Activated CD4-positive, alpha-beta T cell treated with anti-CD3 and anti-CD28 coated beads for 36 hours (primary cell): ENCODE measurements at regions of chr2 and their contacts with region 1.

Region 1: GRCh38 chr2:174465327-174465726 is 21.5 kb downstream of the GPR155 start:
- DNase-seq: no peak
- ATAC-seq: no peak
- H3K4me3 Mint-ChIP-seq: no peak overlapping the region
- H3K27ac Mint-ChIP-seq: no peak overlapping the region
- H3K4me1 Mint-ChIP-seq: no peaks in the 10 kb centered on the region
- H3K27me3 Mint-ChIP-seq: no peaks in the 10 kb centered on the region

Region 2: DNA sequence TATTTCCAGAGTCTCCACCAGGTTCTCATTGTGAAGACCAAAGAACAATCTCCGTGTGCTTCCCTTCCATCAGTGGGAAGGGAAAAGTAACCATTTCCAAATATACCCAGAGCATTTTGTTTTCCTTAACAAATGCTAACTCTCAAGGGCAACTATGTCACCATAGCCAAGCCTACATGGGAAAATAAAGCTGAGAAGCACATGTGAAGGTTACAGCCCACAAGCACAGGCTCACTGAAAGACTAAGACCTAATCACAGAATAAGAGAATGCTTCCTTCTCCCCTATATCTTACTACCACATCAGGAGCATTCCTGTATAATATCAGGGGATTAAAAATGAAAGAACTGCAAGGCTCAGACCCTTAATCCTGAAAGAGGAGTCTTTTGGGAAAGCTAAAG is 102.4 kb before region 1 on chr2:
- CTCF ChIA-PET with region 1: no interaction called
- POLR2A ChIA-PET with region 1: no interaction called
- intact Hi-C with region 1: no loop called
- DNase-seq: no peak
- ATAC-seq: no peak
- H3K4me3 Mint-ChIP-seq: no peak overlapping the region
- H3K27ac Mint-ChIP-seq: no peak overlapping the region
- H3K4me1 Mint-ChIP-seq: no peaks in the 10 kb centered on the region
- H3K27me3 Mint-ChIP-seq: no peaks in the 10 kb centered on the region

Region 3: GRCh38 chr2:174522553-174522952 is 57.2 kb after region 1 on chr2:
- CTCF ChIA-PET with region 1: interaction called, 52 read pairs
- POLR2A ChIA-PET with region 1: interaction called, 9 read pairs
- intact Hi-C with region 1: loop called (anchors 1 kb)
- DNase-seq: no peak
- ATAC-seq: no peak
- H3K4me3 Mint-ChIP-seq: no peak overlapping the region
- H3K27ac Mint-ChIP-seq: no peak overlapping the region
- H3K4me1 Mint-ChIP-seq: peaks cover 10% of the 10 kb centered on the region
- H3K27me3 Mint-ChIP-seq: peaks cover 2% of the 10 kb centered on the region

Region 4: GRCh38 chr2:174554529-174555150 is 89.3 kb after region 1 on chr2:
- CTCF ChIA-PET with region 1: interaction called, 11 read pairs
- POLR2A ChIA-PET with region 1: no interaction called
- intact Hi-C with region 1: no loop called
- DNase-seq: no peak
- ATAC-seq: peak; percentile 53
- H3K4me3 Mint-ChIP-seq: no peak overlapping the region
- H3K27ac Mint-ChIP-seq: peak overlapping the region; percentile 79
- H3K4me1 Mint-ChIP-seq: peaks cover 35% of the 10 kb centered on the region
- H3K27me3 Mint-ChIP-seq: no peaks in the 10 kb centered on the region

Region 5: GRCh38 chr2:174577967-174578589 is 112.8 kb after region 1 on chr2:
- CTCF ChIA-PET with region 1: interaction called, 44 read pairs
- POLR2A ChIA-PET with region 1: no interaction called
- intact Hi-C with region 1: no loop called
- DNase-seq: peak; percentile 68
- ATAC-seq: peak; percentile 74
- H3K4me3 Mint-ChIP-seq: no peak overlapping the region
- H3K27ac Mint-ChIP-seq: peak overlapping the region; percentile 31
- H3K4me1 Mint-ChIP-seq: peaks cover 72% of the 10 kb centered on the region
- H3K27me3 Mint-ChIP-seq: no peaks in the 10 kb centered on the region

Region 6: GRCh38 chr2:174682578-174683391 is 217.5 kb after region 1 on chr2:
- CTCF ChIA-PET with region 1: interaction called, 58 read pairs
- POLR2A ChIA-PET with region 1: no interaction called
- intact Hi-C with region 1: no loop called
- DNase-seq: peak; percentile 66
- ATAC-seq: peak; percentile 66
- H3K4me3 Mint-ChIP-seq: peak overlapping the region; percentile 82
- H3K27ac Mint-ChIP-seq: peak overlapping the region; percentile 90
- H3K4me1 Mint-ChIP-seq: peaks cover 48% of the 10 kb centered on the region
- H3K27me3 Mint-ChIP-seq: no peaks in the 10 kb centered on the region

Region 7: DNA sequence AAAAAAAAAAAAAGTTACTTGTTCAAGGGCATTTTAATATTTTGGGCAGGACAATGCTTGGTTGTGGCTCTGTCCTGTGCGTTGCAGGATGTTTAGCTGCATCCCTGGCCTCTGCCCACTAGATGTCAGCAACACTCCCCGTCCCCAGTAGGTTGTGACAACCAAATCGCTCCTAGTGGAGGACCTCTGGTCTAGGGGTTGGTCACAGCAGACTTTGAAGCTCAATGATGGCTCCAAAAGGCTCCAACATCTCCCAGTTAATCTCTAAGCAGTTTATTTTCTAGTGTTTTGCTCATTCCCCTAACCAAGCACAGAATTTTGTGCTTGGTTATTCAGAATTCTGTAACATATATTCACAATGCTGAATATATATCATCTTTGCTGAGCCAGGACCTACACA is 231.9 kb after region 1 on chr2:
- CTCF ChIA-PET with region 1: interaction called, 14 read pairs
- POLR2A ChIA-PET with region 1: no interaction called
- intact Hi-C with region 1: no loop called
- DNase-seq: peak; percentile 80
- ATAC-seq: peak; percentile 99
- H3K4me3 Mint-ChIP-seq: no peak overlapping the region
- H3K27ac Mint-ChIP-seq: no peak overlapping the region
- H3K4me1 Mint-ChIP-seq: no peaks in the 10 kb centered on the region
- H3K27me3 Mint-ChIP-seq: peaks cover 3% of the 10 kb centered on the region